Common myeloid progenitor, CD34-positive (primary cell): ENCODE measurements at regions of chr2 and their contacts with region 1.

Region 1: GRCh38 chr2:113707106-113707505 is 49.3 kb downstream of the SLC35F5 start:
- DNase-seq: no peak
- H3K4me3 ChIP-seq: no peak overlapping the region
- H3K27ac ChIP-seq: no peak overlapping the region
- H3K4me1 ChIP-seq: peaks cover 0 to 4% (median 0%) of the 10 kb centered on the region in 4 experiments
- H3K27me3 ChIP-seq: no peaks in the 10 kb centered on the region

Region 2: DNA sequence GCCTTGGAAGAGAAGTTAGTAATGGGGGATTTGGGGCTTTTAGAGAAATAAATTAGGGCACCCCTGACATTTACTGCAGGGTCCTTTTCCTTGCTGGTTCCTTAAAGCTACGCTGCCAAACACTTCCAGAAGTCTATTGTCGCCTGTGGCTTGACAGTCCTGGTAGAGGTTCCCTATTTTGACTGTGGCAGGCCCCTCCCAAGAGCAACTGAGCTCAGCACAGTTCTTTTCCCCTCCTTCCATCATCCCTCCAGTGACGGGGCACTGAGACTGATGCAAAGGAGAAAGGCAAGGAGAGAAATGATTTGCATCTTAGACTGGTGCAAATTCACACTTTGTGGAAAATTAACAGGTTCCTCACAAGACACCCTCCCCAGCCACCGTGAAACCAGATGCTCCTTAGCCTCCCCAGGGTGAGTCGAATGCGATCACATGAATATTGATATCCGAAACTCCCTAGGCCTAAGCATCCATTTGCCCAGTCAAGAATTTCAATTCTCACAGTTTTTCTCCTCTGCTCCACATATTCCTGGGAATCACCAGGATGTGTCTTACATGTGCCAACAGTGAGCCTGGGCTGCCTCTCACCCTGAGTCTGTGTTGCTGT is 34.7 kb before region 1 on chr2:
- CTCF ChIA-PET with region 1: no interaction called
- POLR2A ChIA-PET with region 1: no interaction called
- DNase-seq: peak in 2 of 3 donors; percentile 26 to 65
- H3K4me3 ChIP-seq: peak overlapping the region in 1 of 7 experiments; percentile 8
- H3K27ac ChIP-seq: no peak overlapping the region
- H3K4me1 ChIP-seq: peaks cover 0 to 7% (median 6%) of the 10 kb centered on the region in 4 experiments
- H3K27me3 ChIP-seq: no peaks in the 10 kb centered on the region

Region 3: DNA sequence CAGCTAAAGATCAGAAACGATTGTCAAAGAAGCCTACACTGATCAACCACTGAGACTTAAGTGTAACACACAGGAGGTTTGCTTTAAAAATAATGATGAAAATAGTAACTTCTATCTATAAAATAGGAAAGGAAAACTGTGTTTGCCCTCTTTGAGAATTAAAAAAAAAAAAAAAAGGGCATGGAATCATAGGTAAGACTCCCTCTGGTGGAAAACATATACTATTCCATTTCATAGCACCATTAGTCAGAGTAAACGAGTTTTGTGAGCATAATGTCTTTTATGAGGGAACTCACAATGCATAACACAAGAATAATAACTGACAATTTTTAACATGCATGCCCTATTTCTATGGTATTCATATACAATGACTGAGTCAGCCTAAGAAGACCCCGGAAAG is 13.1 kb after region 1 on chr2:
- CTCF ChIA-PET with region 1: interaction called, 15 read pairs
- POLR2A ChIA-PET with region 1: no interaction called
- DNase-seq: peak; percentile 3 to 49 (median 43)
- H3K4me3 ChIP-seq: no peak overlapping the region
- H3K27ac ChIP-seq: no peak overlapping the region
- H3K4me1 ChIP-seq: no peaks in the 10 kb centered on the region
- H3K27me3 ChIP-seq: no peaks in the 10 kb centered on the region